Left ventricle myocardium superior (tissue), 1 donor: ENCODE measurements at regions of chr1 and their contacts with region 1.

Region 1: DNA sequence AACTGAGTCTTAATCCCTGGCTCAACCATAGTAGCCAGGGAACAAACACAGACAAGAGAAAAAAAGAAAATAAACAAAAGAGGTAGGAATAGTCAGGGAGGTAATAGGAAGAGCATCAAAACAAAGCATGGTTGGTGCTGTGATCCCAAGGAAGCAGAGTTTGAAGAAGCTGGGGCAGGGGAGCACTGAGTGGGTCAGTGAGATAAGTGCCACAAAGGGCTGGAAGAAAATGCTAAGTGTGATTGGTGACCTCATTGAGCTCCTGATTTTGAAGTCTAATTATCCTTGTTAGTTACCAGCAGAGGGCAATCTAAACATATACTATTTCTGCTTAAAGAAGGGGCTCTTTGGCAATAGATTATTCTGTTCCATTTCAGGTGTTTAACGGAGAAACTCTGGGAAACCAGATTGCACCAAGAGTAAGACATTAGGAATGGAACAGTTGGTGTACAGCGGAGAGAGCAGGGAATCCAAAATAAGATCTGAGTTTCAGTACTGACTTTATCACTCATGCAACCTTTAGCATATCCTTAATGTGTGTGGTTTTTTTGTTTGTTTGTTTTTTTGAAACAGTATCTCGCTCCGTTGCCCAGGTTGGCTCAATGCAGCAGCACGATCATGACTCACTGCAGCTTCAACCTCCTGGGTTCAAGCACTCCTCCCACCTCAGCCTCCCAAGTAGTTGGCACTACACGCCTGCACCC is 30.7 kb upstream of the KIAA1614 start:
- DNase-seq: no peak
- ATAC-seq: peak; percentile 62

Region 2: DNA sequence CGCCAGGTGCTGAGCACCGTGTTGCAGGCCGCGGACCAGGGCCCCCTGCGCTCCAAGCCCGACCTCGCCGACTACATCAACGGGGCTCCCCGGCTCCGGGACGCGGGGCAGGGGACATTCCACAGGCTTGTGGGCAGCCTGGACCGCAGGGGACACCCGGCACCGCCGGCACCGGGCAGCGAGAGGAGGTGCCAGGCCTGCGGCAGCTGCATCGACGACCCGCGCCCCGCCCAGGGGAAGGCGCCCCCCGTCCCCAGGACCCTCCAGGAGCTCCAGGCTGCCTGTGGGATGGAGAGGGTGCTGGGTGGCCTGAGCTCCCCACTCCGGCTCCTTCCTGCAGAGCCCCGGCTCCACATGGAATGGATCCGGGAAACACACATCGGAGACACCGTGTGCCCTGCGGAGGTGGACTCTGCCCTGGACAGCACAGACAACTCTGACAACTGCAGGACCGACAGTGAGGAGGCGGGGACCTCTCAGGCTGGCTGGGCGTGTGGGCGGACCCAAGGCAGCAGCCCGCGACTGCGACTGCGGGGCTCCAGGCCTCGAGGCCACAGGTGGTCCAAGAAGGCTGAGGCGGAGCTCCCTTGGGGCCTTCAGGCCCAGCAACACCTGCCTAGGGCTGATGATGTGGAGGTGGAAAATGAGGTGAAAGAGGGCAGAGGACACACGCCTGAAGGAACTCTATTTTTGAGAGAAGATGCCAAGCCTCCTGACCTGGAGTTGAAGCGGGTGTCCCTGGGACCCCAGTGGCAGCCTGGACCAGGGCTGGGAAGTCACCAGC is 53.6 kb after region 1 on chr1:
- intact Hi-C with region 1: no loop called
- DNase-seq: no peak
- ATAC-seq: no peak

Region 3: GRCh38 chr1:181166377-181167196 is 284.6 kb after region 1 on chr1:
- intact Hi-C with region 1: loop called (anchors 10 kb)
- DNase-seq: peak; percentile 57
- ATAC-seq: peak; percentile 98